ENCODE measurements at regions of chr9 and their contacts with region 1.

Region 1: DNA sequence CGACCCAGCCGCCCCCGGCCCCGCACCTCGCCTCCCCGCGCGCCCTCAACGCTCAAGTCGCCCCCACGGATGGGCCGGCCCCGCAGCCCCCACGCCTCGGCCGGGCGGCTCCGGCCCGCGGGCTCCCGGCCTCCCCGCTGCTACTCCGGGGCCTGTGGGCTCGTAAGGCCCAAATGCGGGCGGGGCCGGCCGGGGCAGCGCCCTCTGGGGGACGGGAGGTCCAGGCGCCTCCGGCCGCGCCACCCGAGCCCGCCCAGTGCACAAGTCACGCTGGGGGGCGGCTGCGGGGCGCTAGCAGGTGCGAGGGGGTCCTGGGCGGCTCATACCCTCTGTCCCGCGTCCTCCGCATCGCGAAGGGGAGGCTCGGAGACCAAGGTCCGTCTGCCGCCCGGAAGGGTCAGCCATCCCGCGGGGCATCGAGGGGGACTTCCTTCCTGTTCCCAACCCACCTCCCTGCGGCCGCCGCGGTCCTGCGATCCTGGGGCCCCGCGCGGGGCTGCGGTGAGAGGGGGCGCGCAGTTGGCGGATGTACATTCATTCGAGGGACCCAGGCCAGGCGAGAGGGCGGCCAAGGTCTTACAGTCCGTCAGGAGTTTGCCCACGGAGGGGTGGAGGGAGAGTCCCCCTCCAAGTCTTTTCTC is at the start of gene CIZ1:
- DNase-seq: peak; percentile 97
- H3K4me3 ChIP-seq: peak within 1 kb of the TSS; percentile 63 to 94
- H3K27ac ChIP-seq: peak within 1 kb of the TSS; percentile 61 to 81
- H3K4me1 ChIP-seq: peaks cover 5 to 11% of the 10 kb centered on the region in 2 experiments; a peak in 2 of 4 replicates
- H3K27me3 ChIP-seq: no peaks in the 10 kb centered on the region
- CTCF ChIP-seq: peak; percentile 73
- EP300 ChIP-seq: no peak
- RAD21 ChIP-seq: no peak
- polyA plus RNA-seq, gene CIZ1: 36.6 and 37.0 TPM in 2 replicates

Region 2: DNA sequence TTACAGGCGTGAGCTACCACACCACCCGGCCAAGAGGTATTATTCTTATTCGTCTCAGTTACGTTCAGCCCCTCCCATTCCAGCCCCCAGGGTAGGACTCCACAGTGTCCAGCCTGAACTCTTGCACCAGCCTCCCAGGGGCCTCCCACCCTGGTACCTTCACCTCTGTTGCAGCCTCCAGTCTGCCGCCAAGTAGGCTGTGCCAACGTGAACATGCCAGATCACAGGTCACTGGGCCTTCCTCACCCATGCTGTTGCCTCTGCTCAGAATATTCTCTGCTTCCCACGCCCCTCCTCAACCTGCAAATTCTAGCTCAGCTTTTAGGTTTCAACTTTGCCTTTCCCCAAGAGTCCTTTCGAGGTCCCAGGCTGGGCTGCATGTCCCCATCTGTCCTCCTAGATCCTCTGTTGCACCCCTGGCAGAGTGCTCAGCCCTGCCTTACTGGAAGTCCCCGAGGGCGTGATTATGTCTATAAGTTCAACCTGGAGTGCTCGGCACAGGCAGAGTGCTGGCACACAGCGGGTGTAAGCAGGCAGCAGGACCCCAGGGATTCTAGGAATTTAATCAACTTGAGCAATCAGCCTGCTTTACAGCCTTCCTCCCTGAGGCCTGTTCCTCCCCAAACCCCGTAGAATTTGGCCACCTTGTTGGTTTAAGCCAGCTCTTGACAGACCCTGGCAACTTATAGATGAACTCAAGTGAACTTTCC is 592.5 kb before region 1 on chr9:
- CTCF ChIA-PET with region 1: no interaction called
- POLR2A ChIA-PET with region 1: no interaction called
- DNase-seq: no peak
- H3K4me3 ChIP-seq: no peak overlapping the region
- H3K27ac ChIP-seq: no peak overlapping the region
- H3K4me1 ChIP-seq: peaks cover 0 to 8% of the 10 kb centered on the region in 2 experiments; a peak in 1 of 4 replicates
- H3K27me3 ChIP-seq: no peaks in the 10 kb centered on the region
- CTCF ChIP-seq: no peak
- EP300 ChIP-seq: no peak
- RAD21 ChIP-seq: no peak

Region 3: DNA sequence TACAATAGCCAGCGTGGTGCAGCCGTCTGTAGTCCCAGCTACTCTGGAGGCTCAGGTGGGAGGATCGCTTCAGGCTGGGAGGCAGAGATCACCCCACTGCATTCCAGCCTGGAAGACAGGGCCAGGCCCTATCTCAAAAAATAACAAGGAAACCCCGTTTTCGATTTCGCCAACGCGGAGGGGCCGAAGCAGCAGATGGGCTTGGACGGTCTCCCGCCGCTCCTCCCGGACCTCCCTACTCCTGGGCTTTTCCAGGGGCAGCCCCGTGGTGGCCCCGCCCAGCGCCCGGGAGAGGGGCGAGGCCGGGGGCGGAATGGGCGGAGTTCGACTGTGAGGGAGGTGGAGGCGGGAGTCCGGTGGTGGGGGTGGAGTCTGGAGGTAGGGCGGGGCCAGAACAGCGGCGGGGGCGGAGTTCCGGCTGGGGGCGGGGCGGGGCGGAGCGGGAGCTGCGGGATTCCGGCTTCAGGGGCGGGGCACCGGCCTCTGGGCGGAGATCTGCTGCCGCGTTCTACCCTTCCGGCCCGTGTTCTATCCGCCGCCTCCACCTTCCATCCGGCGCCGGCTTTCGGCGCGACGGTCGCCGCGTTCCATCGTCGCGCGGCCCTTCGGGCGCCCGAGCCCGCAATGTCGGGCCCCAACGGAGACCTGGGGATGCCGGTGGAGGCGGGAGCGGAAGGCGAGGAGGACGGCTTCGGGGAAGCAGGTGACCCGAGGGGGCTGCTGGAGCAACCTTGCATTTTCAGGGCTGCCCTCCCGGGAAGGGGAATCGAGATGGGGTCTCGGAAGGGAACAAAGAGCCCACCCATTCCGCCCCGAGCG is 31.5 kb before region 1 on chr9 and contains the start of gene BBLN:
- CTCF ChIA-PET with region 1: interaction called, 16 read pairs
- POLR2A ChIA-PET with region 1: interaction called, 5 read pairs
- DNase-seq: peak; percentile 100
- H3K4me3 ChIP-seq: peak within 1 kb of the TSS; percentile 73 to 93
- H3K27ac ChIP-seq: peak within 1 kb of the TSS; percentile 39 to 81; a peak in 3 of 4 replicates
- H3K4me1 ChIP-seq: peaks cover 0 to 12% of the 10 kb centered on the region in 2 experiments; a peak in 2 of 4 replicates
- H3K27me3 ChIP-seq: no peaks in the 10 kb centered on the region
- CTCF ChIP-seq: no peak
- EP300 ChIP-seq: no peak
- RAD21 ChIP-seq: no peak
- polyA plus RNA-seq, gene BBLN: 79.4 and 109 TPM in 2 replicates

Region 4: GRCh38 chr9:128175102-128175563 is 16.4 kb before region 1 on chr9:
- CTCF ChIA-PET with region 1: interaction called, 18 read pairs
- POLR2A ChIA-PET with region 1: interaction called, 3 read pairs
- DNase-seq: no peak
- H3K4me3 ChIP-seq: no peak overlapping the region
- H3K27ac ChIP-seq: peak overlapping the region in 1 of 2 experiments; percentile 31; a peak in 2 of 4 replicates
- H3K4me1 ChIP-seq: peaks cover 3 to 5% of the 10 kb centered on the region in 2 experiments; a peak in 2 of 4 replicates
- H3K27me3 ChIP-seq: no peaks in the 10 kb centered on the region
- CTCF ChIP-seq: no peak
- EP300 ChIP-seq: no peak
- RAD21 ChIP-seq: no peak

Measured in SK-N-SH (cell line).